Activated T-helper 2 cell treated with anti-CD3 and anti-CD28 coated beads, Interferon-gamma antibody, Interleukin-2, Interleukin-4, amounts not matched to agents 10 μg/mL and 5 μg/mL and 100 μg/mL, durations not matched to agents 14 hours and 24 hours and 36 hours (primary cell): ENCODE measurements at regions of chr1 and their contacts with region 1.

Region 1: DNA sequence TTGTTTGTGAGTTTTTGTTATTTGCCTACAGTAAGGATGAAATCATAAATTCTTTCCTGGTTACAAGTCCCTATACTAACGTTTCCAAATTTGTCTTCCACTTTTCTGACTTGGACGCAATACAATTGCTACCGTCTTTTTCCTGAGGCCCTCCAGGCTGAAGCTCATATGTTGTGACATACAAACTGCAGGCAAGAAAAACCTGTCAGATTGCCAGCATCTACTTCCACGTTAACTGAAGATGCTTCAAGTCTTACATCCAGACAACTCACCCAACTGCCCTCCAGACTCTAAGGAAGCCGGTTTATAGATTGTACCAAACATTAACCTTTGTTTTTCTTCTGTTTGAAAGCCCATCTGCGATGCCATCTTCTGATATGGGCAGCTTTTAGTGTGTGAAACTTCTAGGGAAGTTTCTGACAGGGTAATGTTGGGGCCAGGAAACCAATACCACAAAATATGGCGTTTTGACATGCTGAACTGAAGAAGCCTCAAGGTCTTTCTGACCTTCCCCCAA is 21.4 kb upstream of the RNF11 start:
- DNase-seq: peak; percentile 29
- H3K4me3 Mint-ChIP-seq: peak overlapping the region; percentile 56
- H3K27ac Mint-ChIP-seq: peak overlapping the region; percentile 91
- H3K4me1 Mint-ChIP-seq: peaks cover 38% of the 10 kb centered on the region
- H3K27me3 Mint-ChIP-seq: no peaks in the 10 kb centered on the region

Region 2: DNA sequence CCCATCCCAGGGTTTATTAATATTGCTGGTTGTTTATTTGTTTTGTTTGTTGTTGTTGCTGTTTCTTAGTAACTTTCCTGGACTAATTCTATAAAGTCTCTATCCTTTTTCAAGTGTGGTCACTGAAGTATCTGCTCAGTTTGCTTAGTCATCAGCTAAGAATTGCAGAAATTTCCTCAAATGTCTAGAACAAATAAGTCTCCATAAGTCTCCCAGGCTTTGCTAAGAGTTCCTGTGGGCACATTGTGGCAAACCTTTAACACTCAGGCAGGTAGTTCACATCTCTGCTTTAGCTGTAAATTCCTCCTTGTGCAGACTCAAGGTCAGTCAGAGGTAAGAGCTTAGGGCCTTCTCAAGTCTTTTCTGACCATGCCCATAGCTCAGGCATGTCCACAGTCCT is 151.6 kb before region 1 on chr1:
- intact Hi-C with region 1: no loop called
- DNase-seq: no peak
- H3K4me3 Mint-ChIP-seq: no peak overlapping the region
- H3K27ac Mint-ChIP-seq: no peak overlapping the region
- H3K4me1 Mint-ChIP-seq: no peaks in the 10 kb centered on the region
- H3K27me3 Mint-ChIP-seq: peaks cover 2% of the 10 kb centered on the region

Region 3: DNA sequence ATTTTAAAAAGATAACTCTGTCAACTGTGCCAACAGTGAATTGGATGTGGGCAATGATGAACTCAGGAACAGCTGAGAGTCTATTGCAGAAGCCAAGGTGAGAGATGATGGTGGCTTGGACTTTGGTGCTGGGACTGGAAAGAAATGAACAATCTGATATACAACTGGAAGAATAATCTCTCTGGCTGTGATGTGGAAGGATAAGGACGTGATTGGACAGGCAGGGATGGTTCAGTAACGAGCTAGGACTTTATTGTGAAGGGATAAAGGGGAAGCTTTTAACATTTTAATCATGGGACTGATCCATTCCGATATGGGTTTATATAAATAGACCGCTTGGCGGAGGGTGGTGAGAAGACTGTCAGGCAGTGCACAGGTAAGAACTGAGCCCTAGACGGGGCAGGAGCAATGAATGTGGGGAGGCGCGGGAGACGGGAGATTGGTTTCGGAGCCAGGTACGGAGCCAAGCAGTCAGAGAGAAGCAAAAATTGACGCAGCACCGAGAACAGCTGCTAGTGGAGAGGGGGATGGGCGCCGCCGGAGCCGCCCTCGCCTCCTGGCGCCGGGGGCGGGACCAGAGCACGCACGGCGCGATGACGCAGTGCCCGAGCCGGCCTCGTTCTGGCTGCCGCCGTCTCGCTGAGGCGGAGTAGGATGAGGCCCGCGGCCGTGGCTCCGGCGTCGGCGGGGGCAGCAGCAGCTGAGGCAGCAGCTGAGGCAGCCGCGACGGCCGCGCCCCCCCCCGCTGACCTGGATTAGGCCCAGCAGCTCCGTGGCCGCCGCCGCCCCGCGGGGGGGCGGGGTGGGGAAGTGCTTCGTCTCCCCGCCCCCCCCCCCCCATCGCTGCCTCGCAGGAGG is 21.2 kb after region 1 on chr1 and contains the start of gene RNF11:
- intact Hi-C with region 1: loop called (anchors 1 kb)
- DNase-seq: peak; percentile 90
- H3K4me3 Mint-ChIP-seq: peak within 1 kb of the TSS; percentile 93
- H3K27ac Mint-ChIP-seq: peak within 1 kb of the TSS; percentile 85
- H3K4me1 Mint-ChIP-seq: peaks cover 34% of the 10 kb centered on the region
- H3K27me3 Mint-ChIP-seq: no peaks in the 10 kb centered on the region
- total RNA-seq, gene RNF11: 64.8 and 65.6 TPM in 2 replicates

Region 4: GRCh38 chr1:51264451-51264850 is 49.8 kb after region 1 on chr1:
- intact Hi-C with region 1: loop called (anchors 2 kb)
- DNase-seq: no peak
- H3K4me3 Mint-ChIP-seq: no peak overlapping the region
- H3K27ac Mint-ChIP-seq: peak overlapping the region; percentile 2
- H3K4me1 Mint-ChIP-seq: peaks cover 71% of the 10 kb centered on the region
- H3K27me3 Mint-ChIP-seq: no peaks in the 10 kb centered on the region